Prostate gland (tissue), 2 donors: ENCODE measurements at regions of chr5 and their contacts with region 1.

Region 1: DNA sequence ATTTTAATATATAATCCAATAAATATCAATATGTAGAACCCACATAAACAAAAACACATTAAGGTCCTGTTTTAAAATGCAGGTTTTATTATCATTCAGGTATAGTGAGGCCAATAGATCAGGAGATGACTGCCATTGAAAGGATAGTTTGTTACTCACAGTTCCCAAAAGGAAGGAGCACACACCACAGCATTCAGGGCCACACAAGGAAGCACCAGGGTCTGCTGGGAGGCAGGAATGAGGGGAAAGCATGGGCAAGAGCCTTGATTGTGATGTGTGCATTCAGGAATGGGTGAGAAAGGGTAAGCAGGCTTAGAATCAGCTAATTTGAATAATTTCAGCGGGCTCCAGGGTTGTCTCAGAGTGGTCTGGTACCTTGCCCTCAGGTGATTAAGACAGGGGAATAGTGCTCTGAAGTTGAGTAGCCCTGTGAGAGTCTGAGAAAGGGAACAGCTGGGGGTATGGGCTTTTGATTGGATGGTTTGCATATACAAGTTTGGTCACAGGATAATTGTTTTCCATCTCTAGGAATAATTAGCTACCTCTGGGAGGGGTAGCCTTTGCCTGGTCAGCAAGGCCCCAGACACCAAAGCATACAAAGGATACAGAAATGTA is 19.8 kb upstream of the OTULIN start:
- DNase-seq: no peak
- H3K4me3 ChIP-seq: no peak overlapping the region
- H3K27ac ChIP-seq: no peak overlapping the region
- H3K4me1 ChIP-seq: no peaks in the 10 kb centered on the region
- H3K27me3 ChIP-seq: no peaks in the 10 kb centered on the region
- CTCF ChIP-seq: no peak
- POLR2A ChIP-seq: no peak

Region 2: GRCh38 chr5:14364576-14365472 is 279.9 kb before region 1 on chr5:
- intact Hi-C with region 1: loop called (anchors 10 kb)
- DNase-seq: no peak
- H3K4me3 ChIP-seq: no peak overlapping the region
- H3K27ac ChIP-seq: no peak overlapping the region
- H3K4me1 ChIP-seq: no peaks in the 10 kb centered on the region
- H3K27me3 ChIP-seq: no peaks in the 10 kb centered on the region
- CTCF ChIP-seq: peak in 3 of 4 experiments; percentile 35 to 54 (median 45)
- POLR2A ChIP-seq: no peak

Region 3: GRCh38 chr5:14399054-14399692 is 245.6 kb before region 1 on chr5:
- intact Hi-C with region 1: loop called (anchors 2 kb)
- DNase-seq: peak; percentile 25
- H3K4me3 ChIP-seq: no peak overlapping the region
- H3K27ac ChIP-seq: no peak overlapping the region
- H3K4me1 ChIP-seq: no peaks in the 10 kb centered on the region
- H3K27me3 ChIP-seq: no peaks in the 10 kb centered on the region
- CTCF ChIP-seq: peak; percentile 39 to 74 (median 63)
- POLR2A ChIP-seq: no peak

Region 4: GRCh38 chr5:14510156-14510734 is 134.5 kb before region 1 on chr5:
- intact Hi-C with region 1: loop called (anchors 10 kb)
- DNase-seq: peak; percentile 45
- H3K4me3 ChIP-seq: no peak overlapping the region
- H3K27ac ChIP-seq: peak overlapping the region; percentile 23 to 42
- H3K4me1 ChIP-seq: no peaks in the 10 kb centered on the region
- H3K27me3 ChIP-seq: no peaks in the 10 kb centered on the region
- CTCF ChIP-seq: peak in 2 of 4 experiments; percentile 9 to 56
- POLR2A ChIP-seq: no peak